CD8-positive, alpha-beta T cell (primary cell): ENCODE measurements at regions of chr19 and their contacts with region 1.

Region 1: DNA sequence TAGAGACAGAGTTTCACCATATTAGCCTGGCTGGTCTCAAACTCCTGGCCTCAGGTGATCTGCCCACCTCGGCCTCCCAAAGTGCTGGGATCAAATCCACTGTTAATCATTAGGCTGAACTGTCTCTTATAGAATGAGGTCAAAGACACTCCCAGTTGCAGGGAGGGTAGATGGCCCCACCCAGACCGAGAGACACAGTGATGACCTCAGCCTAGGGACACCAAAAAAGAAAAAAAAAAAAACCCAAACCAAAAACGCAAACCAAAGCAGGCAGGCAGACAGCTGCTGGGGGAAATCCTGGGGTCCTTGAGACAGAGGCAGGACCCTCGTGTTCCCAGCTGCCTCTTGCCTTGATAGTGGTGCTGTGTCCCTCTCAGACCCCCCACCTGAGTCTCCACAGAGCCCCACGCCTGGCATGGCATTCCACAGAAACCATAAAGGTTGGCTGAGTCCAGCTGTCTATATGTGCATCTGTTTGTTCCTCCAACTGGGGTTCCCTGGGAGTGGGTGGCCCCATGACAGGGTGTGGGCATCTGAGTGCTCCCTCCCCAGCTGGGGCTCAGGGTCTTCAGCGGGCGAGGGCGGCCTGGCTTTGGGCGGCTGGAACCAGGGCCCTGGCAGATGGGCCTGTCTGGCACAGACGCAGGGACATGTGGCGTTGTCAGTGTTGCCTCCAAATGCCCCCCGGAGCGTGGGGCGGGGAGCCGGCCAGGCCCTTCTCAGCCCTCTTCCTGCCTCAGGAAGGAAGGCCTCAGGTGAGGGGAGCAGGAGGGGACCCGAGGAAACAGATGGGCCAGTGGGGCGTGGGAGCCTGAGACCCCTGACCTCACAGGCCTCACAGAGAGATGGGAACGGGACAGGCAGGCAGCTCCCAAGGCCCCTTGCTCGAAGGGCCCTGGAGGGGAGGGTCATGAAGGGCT is 5.2 kb downstream of the DAND5 start:
- DNase-seq: no peak
- ATAC-seq: no peak
- H3K4me3 ChIP-seq: no peak overlapping the region
- H3K4me3 Mint-ChIP-seq: no peak overlapping the region
- H3K27ac ChIP-seq: no peak overlapping the region
- H3K27ac Mint-ChIP-seq: no peak overlapping the region
- H3K4me1 ChIP-seq: no peaks in the 10 kb centered on the region
- H3K4me1 Mint-ChIP-seq: no peaks in the 10 kb centered on the region
- H3K27me3 ChIP-seq: peaks cover 0 to 15% of the 10 kb centered on the region in 2 experiments
- H3K27me3 Mint-ChIP-seq: peaks cover 16% of the 10 kb centered on the region
- CTCF ChIP-seq: no peak

Region 2: DNA sequence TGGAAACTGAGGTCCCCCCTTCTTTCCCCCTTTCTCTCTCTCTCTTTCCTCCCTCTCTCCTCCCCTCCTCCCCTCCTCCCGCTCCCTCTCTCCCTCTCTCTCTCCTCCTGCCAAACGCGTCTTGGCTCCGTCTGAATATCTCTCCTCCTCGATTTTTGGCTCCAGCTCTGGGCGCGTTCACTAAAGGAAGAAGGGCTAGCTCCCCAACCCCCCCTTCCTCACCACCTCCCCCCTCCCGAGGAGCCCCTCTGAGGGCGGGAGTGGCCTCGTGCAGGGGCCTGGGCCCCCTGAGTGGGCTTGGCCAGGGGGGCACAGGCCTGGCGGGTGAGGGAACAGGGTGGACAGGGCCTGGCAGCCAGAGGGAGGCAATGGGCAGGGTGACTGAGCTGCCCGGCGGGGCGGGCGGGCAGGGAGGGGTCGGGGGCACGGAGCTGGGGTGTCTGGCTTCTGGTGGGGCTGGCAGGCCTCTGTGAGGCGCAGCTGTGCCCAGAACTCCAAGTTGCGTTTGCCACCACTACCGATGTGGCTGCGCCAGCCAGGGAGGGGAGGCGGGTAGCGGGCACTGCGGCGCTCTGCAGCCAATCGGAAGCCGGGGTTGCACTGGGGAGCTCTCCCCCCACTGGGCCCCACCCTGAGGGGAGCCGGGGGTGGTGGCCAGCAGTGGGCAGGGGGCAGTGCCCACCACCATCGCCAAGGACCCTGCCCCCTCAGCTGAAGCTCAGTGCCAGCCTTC is 27.8 kb after region 1 on chr19:
- CTCF ChIA-PET with region 1: interaction called, 13 read pairs
- POLR2A ChIA-PET with region 1: no interaction called
- intact Hi-C with region 1: no loop called
- DNase-seq: no peak
- ATAC-seq: no peak
- H3K4me3 ChIP-seq: no peak overlapping the region
- H3K4me3 Mint-ChIP-seq: no peak overlapping the region
- H3K27ac ChIP-seq: no peak overlapping the region
- H3K27ac Mint-ChIP-seq: no peak overlapping the region
- H3K4me1 ChIP-seq: no peaks in the 10 kb centered on the region
- H3K4me1 Mint-ChIP-seq: no peaks in the 10 kb centered on the region
- H3K27me3 ChIP-seq: no peaks in the 10 kb centered on the region
- H3K27me3 Mint-ChIP-seq: no peaks in the 10 kb centered on the region
- CTCF ChIP-seq: no peak

Region 3: GRCh38 chr19:13033819-13034611 is 59.5 kb after region 1 on chr19:
- CTCF ChIA-PET with region 1: interaction called, 15 read pairs
- POLR2A ChIA-PET with region 1: no interaction called
- intact Hi-C with region 1: loop called in 1 of 2 experiments (anchors 5 kb)
- DNase-seq: peak in 8 of 9 experiments; percentile 13 to 65 (median 50)
- ATAC-seq: peak; percentile 84
- H3K4me3 ChIP-seq: no peak overlapping the region
- H3K4me3 Mint-ChIP-seq: no peak overlapping the region
- H3K27ac ChIP-seq: no peak overlapping the region
- H3K27ac Mint-ChIP-seq: no peak overlapping the region
- H3K4me1 ChIP-seq: no peaks in the 10 kb centered on the region
- H3K4me1 Mint-ChIP-seq: no peaks in the 10 kb centered on the region
- H3K27me3 ChIP-seq: no peaks in the 10 kb centered on the region
- H3K27me3 Mint-ChIP-seq: no peaks in the 10 kb centered on the region
- CTCF ChIP-seq: peak; percentile 50

Region 4: DNA sequence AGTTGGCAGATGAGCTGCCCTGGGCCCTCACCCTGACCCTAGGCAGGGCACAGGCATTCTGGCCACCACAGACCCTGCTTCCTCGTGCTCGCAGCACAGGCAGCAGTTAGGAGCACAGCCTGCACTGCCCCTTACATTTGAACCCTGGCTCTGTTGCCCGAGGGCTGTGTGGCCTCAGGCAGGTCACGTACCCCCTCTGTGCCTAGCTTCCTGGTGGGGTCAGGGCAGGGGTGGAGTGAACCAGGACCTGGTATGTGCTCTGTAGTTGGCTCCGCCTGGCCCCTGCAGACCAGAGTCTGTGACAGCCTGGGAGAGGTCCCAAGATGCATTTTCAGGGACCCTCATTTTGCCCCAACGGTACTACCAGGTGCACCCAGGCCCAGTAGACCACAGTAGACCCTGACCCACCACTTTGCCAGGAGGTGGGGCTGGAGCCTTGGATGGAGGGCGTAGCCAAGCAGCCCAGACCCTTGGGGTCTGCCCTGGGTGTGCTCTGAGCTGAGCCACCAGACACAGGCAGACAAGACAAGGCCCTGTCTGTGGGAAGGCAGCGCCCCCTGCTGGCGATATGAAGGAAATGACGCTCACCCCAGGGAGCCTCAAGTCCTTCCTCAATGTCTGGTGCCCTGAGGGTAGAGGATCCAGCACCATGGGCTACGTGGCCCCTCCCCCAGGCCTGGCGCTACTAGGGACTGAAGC is 119.0 kb after region 1 on chr19:
- CTCF ChIA-PET with region 1: interaction called, 138 read pairs
- POLR2A ChIA-PET with region 1: no interaction called
- intact Hi-C with region 1: loop called (anchors 1 kb)
- DNase-seq: peak; percentile 55 to 88 (median 80)
- ATAC-seq: peak; percentile 74
- H3K4me3 ChIP-seq: no peak overlapping the region
- H3K4me3 Mint-ChIP-seq: no peak overlapping the region
- H3K27ac ChIP-seq: no peak overlapping the region
- H3K27ac Mint-ChIP-seq: no peak overlapping the region
- H3K4me1 ChIP-seq: peaks cover 29% of the 10 kb centered on the region
- H3K4me1 Mint-ChIP-seq: peaks cover 18% of the 10 kb centered on the region
- H3K27me3 ChIP-seq: peaks cover 16 to 28% of the 10 kb centered on the region in 2 experiments
- H3K27me3 Mint-ChIP-seq: peaks cover 21% of the 10 kb centered on the region
- CTCF ChIP-seq: peak; percentile 92

Region 5: GRCh38 chr19:13104360-13104847 is 129.8 kb after region 1 on chr19:
- CTCF ChIA-PET with region 1: interaction called, 30 read pairs
- POLR2A ChIA-PET with region 1: interaction called, 3 read pairs
- intact Hi-C with region 1: no loop called
- DNase-seq: peak in 8 of 9 experiments; percentile 53 to 79 (median 70)
- ATAC-seq: peak; percentile 64
- H3K4me3 ChIP-seq: peak overlapping the region; percentile 59 to 81
- H3K4me3 Mint-ChIP-seq: peak overlapping the region; percentile 89
- H3K27ac ChIP-seq: peak overlapping the region; percentile 60 to 63
- H3K27ac Mint-ChIP-seq: peak overlapping the region; percentile 87
- H3K4me1 ChIP-seq: peaks cover 51% of the 10 kb centered on the region
- H3K4me1 Mint-ChIP-seq: peaks cover 34% of the 10 kb centered on the region
- H3K27me3 ChIP-seq: no peaks in the 10 kb centered on the region
- H3K27me3 Mint-ChIP-seq: no peaks in the 10 kb centered on the region
- CTCF ChIP-seq: peak; percentile 92

Region 6: GRCh38 chr19:13262450-13262849 is 287.9 kb after region 1 on chr19:
- CTCF ChIA-PET with region 1: interaction called, 24 read pairs
- POLR2A ChIA-PET with region 1: no interaction called
- intact Hi-C with region 1: loop called (anchors 1 kb)
- DNase-seq: peak in 2 of 9 experiments; percentile 61 to 72
- ATAC-seq: peak; percentile 59
- H3K4me3 ChIP-seq: no peak overlapping the region
- H3K4me3 Mint-ChIP-seq: no peak overlapping the region
- H3K27ac ChIP-seq: no peak overlapping the region
- H3K27ac Mint-ChIP-seq: no peak overlapping the region
- H3K4me1 ChIP-seq: no peaks in the 10 kb centered on the region
- H3K4me1 Mint-ChIP-seq: no peaks in the 10 kb centered on the region
- H3K27me3 ChIP-seq: no peaks in the 10 kb centered on the region
- H3K27me3 Mint-ChIP-seq: peaks cover 8% of the 10 kb centered on the region
- CTCF ChIP-seq: peak; percentile 79

Region 7: DNA sequence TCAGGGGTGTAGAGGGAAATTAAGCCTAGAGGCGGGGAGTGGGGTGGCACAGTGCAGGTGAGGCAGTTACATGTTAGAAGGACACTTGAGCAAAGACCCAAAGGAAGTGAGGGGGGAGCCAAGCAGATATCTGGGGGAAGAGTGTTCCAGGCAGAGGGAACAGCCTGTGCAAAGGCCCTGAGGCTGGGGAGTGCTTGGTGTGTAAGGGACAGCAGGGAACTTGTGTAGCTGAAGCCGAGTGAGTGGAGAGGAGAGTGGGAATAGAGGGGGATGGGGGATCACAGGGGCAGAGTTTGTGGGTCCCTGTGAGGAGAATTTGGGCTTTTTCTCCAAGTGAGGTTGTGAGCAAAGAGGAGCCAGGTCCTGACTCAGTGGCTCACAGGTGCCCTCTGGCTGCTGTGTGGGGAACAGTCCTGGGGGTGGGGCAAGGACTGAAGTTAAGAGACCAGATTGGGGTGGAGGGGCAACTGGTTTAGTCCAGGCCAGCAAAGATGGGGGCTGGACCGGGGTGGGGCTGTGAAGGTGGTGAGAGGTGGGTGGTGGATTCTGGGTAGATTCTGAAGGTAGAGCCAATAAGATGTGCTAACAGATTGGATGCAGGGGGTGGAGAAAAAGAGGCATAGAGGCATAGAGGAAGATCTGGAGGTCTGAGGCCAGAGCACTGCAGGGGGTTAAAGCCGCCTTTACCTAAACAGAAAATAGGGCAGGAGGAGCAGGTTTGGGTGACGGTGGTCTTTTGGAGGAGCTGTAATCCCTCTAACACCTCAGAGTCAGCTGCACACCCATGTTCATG is 456.4 kb after region 1 on chr19:
- CTCF ChIA-PET with region 1: no interaction called
- POLR2A ChIA-PET with region 1: no interaction called
- intact Hi-C with region 1: loop called (anchors 5 to 10 kb)
- DNase-seq: peak; percentile 10 to 56 (median 42)
- ATAC-seq: peak; percentile 58
- H3K4me3 ChIP-seq: no peak overlapping the region
- H3K4me3 Mint-ChIP-seq: no peak overlapping the region
- H3K27ac ChIP-seq: no peak overlapping the region
- H3K27ac Mint-ChIP-seq: no peak overlapping the region
- H3K4me1 ChIP-seq: no peaks in the 10 kb centered on the region
- H3K4me1 Mint-ChIP-seq: no peaks in the 10 kb centered on the region
- H3K27me3 ChIP-seq: no peaks in the 10 kb centered on the region
- H3K27me3 Mint-ChIP-seq: peaks cover 29% of the 10 kb centered on the region
- CTCF ChIP-seq: peak; percentile 26